GM12878 (cell line): ENCODE measurements at regions of chr1 and their contacts with region 1.

Region 1: GRCh38 chr1:36359911-36360550 is 25.7 kb downstream of the STK40 start:
- DNase-seq: no peak
- ATAC-seq: peak; percentile 34; the same call in 2 of the 3 replicates
- H3K4me3 ChIP-seq: no peak overlapping the region
- H3K27ac ChIP-seq: no peak overlapping the region
- H3K4me1 ChIP-seq: peaks cover 6% of the 10 kb centered on the region
- H3K27me3 ChIP-seq: no peaks in the 10 kb centered on the region
- CTCF ChIP-seq: no peak
- EP300 ChIP-seq: no peak
- POLR2A ChIP-seq: no peak
- RAD21 ChIP-seq: no peak

Region 2: GRCh38 chr1:35691080-35691479 is 669.0 kb before region 1 on chr1:
- CTCF ChIA-PET with region 1: no interaction called
- POLR2A ChIA-PET with region 1: no interaction called
- RAD21 ChIA-PET with region 1: no interaction called
- SMC1A ChIA-PET with region 1: no interaction called
- in situ Hi-C with region 1: no loop called
- intact Hi-C with region 1: no loop called
- DNase-seq: no peak
- ATAC-seq: no peak
- H3K4me3 ChIP-seq: no peak overlapping the region
- H3K27ac ChIP-seq: no peak overlapping the region
- H3K4me1 ChIP-seq: no peaks in the 10 kb centered on the region
- H3K27me3 ChIP-seq: peaks cover 0 to 2% of the 10 kb centered on the region in 2 experiments; a peak in 2 of 4 replicates
- CTCF ChIP-seq: no peak
- EP300 ChIP-seq: no peak
- POLR2A ChIP-seq: no peak
- RAD21 ChIP-seq: no peak

Region 3: DNA sequence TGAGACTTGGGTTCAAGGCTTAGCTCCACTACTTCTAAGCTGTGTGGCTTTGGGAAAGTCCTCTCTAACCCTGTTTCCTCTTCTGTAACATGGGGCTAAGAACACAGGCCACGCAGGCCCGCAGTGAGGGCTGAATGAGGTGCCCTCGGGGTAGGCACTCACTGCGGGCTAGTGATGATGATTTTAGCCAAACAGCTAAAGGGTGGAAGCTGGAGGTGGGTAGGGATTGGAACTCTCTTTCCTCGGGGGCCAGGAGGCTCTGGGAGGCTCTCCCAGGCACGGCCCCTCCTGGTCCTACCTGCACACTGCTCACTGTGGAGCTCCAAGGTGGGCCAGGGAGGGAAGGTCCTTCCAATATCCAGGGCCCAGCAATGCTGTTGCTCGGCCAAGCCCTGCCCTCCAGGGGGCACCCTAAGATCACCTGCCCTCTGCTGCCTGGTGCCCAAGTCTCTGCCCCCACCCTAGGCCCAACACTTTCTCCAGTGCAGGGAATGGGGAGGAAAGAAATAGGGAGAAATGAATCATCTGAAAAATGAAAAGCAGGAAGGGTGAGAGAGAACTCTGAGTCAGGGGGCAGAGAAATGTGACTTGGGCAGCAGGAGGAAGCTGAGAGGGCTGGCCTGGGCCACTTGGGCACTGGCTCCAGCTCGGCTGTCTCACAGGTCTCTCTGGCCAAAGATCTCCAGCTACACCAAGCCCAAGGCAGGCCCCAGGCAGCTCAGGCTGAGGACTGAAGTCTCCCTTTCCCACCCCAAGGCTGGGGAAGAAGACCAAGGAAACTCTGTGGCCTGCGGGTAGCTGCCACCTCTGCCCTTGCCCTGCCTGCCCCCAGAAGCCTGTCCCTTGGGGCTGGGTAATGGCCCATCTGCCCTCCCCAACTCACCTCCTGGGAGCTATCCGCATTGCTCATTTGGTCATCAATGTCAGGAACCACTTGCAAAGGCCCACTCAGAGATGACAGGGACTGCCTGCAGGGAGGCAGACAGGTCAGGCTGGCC is 17.3 kb before region 1 on chr1:
- CTCF ChIA-PET with region 1: interaction called, 157 read pairs
- POLR2A ChIA-PET with region 1: no interaction called
- RAD21 ChIA-PET with region 1: interaction called, 4 read pairs
- SMC1A ChIA-PET with region 1: interaction called, 36 read pairs
- in situ Hi-C with region 1: no loop called
- intact Hi-C with region 1: no loop called
- DNase-seq: no peak
- ATAC-seq: peak; percentile 93
- H3K4me3 ChIP-seq: no peak overlapping the region
- H3K27ac ChIP-seq: no peak overlapping the region
- H3K4me1 ChIP-seq: no peaks in the 10 kb centered on the region
- H3K27me3 ChIP-seq: no peaks in the 10 kb centered on the region
- CTCF ChIP-seq: peak; percentile 68 to 90 (median 87)
- EP300 ChIP-seq: no peak
- POLR2A ChIP-seq: no peak
- RAD21 ChIP-seq: peak; percentile 93